ENCODE measurements at regions of chr6 and their contacts with region 1.

Region 1: GRCh38 chr6:168616816-168617765 is 176.1 kb downstream of the SMOC2 start:
- DNase-seq: peak; percentile 48 to 59
- H3K4me3 ChIP-seq: no peak overlapping the region
- H3K4me3 Mint-ChIP-seq: no peak overlapping the region
- H3K27ac Mint-ChIP-seq: peak overlapping the region; percentile 48
- H3K4me1 ChIP-seq: no peaks in the 10 kb centered on the region
- H3K4me1 Mint-ChIP-seq: no peaks in the 10 kb centered on the region
- H3K27me3 ChIP-seq: no peaks in the 10 kb centered on the region
- H3K27me3 Mint-ChIP-seq: no peaks in the 10 kb centered on the region
- CTCF ChIP-seq: peak in 1 of 2 experiments; percentile 48

Region 2: GRCh38 chr6:168713834-168714233 is 96.7 kb after region 1 on chr6:
- CTCF ChIA-PET with region 1: interaction called, 3 read pairs
- POLR2A ChIA-PET with region 1: no interaction called
- intact Hi-C with region 1: loop called (anchors 5 kb)
- DNase-seq: peak; percentile 62 to 69
- H3K4me3 ChIP-seq: no peak overlapping the region
- H3K4me3 Mint-ChIP-seq: no peak overlapping the region
- H3K27ac Mint-ChIP-seq: no peak overlapping the region
- H3K4me1 ChIP-seq: no peaks in the 10 kb centered on the region
- H3K4me1 Mint-ChIP-seq: no peaks in the 10 kb centered on the region
- H3K27me3 ChIP-seq: no peaks in the 10 kb centered on the region
- H3K27me3 Mint-ChIP-seq: no peaks in the 10 kb centered on the region
- CTCF ChIP-seq: peak; percentile 49 to 57

Region 3: DNA sequence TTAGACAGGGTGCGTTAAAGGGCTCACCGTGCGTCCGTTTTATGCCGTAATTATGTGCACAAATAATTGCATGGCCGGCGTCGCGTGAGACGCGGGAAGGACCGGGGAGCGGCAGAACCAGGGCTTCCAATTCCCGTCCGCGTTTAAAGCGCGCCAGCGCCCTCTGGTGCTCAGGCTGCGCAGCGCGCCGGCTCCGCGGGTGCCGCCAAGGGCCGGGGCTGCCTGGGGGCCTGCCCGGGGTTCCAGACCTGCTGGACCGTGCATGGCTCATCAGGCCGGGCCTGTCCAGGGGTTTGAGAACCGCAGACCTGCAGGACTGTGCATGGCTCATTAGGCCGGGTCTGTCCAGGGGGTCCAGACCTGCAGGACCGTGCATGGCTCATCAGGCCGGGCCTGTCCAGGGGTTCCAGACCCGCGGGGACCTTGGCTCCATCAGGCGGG is 267.6 kb after region 1 on chr6:
- CTCF ChIA-PET with region 1: no interaction called
- POLR2A ChIA-PET with region 1: no interaction called
- intact Hi-C with region 1: loop called (anchors 1 kb)
- DNase-seq: peak; percentile 54 to 84
- H3K4me3 ChIP-seq: no peak overlapping the region
- H3K4me3 Mint-ChIP-seq: peak overlapping the region; percentile 27
- H3K27ac Mint-ChIP-seq: no peak overlapping the region
- H3K4me1 ChIP-seq: no peaks in the 10 kb centered on the region
- H3K4me1 Mint-ChIP-seq: peaks cover 5% of the 10 kb centered on the region
- H3K27me3 ChIP-seq: no peaks in the 10 kb centered on the region
- H3K27me3 Mint-ChIP-seq: no peaks in the 10 kb centered on the region
- CTCF ChIP-seq: peak; percentile 77 to 91